Breast epithelium (tissue), 4 donors: ENCODE measurements at regions of chr3 and their contacts with region 1.

Region 1: GRCh38 chr3:183018421-183019192 is 38.3 kb upstream of the DCUN1D1 start:
- DNase-seq: no peak
- H3K4me3 ChIP-seq: no peak overlapping the region
- H3K27ac ChIP-seq: no peak overlapping the region
- H3K4me1 ChIP-seq: no peaks in the 10 kb centered on the region
- H3K27me3 ChIP-seq: no peaks in the 10 kb centered on the region
- CTCF ChIP-seq: no peak
- POLR2A ChIP-seq: no peak

Region 2: GRCh38 chr3:182855076-182855475 is 163.5 kb before region 1 on chr3:
- intact Hi-C with region 1: loop called (anchors 5 kb)
- DNase-seq: no peak
- H3K4me3 ChIP-seq: no peak overlapping the region
- H3K27ac ChIP-seq: no peak overlapping the region
- H3K4me1 ChIP-seq: no peaks in the 10 kb centered on the region
- H3K27me3 ChIP-seq: no peaks in the 10 kb centered on the region
- CTCF ChIP-seq: no peak
- POLR2A ChIP-seq: no peak

Region 3: DNA sequence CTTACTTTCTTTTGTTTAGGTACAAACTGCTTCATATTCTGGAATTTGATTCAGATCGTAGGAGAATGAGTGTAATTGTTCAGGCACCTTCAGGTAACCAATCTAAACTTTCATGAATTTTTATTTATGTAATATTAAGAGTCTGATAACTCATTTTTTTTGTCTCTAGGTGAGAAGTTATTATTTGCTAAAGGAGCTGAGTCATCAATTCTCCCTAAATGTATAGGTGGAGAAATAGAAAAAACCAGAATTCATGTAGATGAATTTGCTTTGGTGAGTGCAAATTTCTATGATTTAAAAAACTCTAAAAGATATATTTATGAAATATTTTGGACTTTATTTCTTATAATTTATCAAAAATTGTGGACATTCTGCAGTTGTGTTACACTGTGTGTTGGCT is 149.5 kb before region 1 on chr3:
- intact Hi-C with region 1: no loop called
- DNase-seq: no peak
- H3K4me3 ChIP-seq: no peak overlapping the region
- H3K27ac ChIP-seq: no peak overlapping the region
- H3K4me1 ChIP-seq: no peaks in the 10 kb centered on the region
- H3K27me3 ChIP-seq: no peaks in the 10 kb centered on the region
- CTCF ChIP-seq: no peak
- POLR2A ChIP-seq: no peak